Mammary epithelial cell (primary cell): ENCODE measurements at regions of chr6 and their contacts with region 1.

Region 1: GRCh38 chr6:95431637-95432228 is 145.6 kb upstream of the MANEA start:
- DNase-seq: peak; percentile 5
- H3K4me3 ChIP-seq: no peak overlapping the region
- H3K27ac ChIP-seq: no peak overlapping the region
- H3K4me1 ChIP-seq: no peaks in the 10 kb centered on the region
- H3K27me3 ChIP-seq: no peaks in the 10 kb centered on the region
- CTCF ChIP-seq: peak; percentile 62 to 72

Region 2: GRCh38 chr6:95769292-95769691 is 337.6 kb after region 1 on chr6:
- CTCF ChIA-PET with region 1: no interaction called
- dilution Hi-C with region 1: no loop called
- in situ Hi-C with region 1: no loop called
- intact Hi-C with region 1: loop called (anchors 5 kb)
- DNase-seq: no peak
- H3K4me3 ChIP-seq: no peak overlapping the region
- H3K27ac ChIP-seq: no peak overlapping the region
- H3K4me1 ChIP-seq: no peaks in the 10 kb centered on the region
- H3K27me3 ChIP-seq: peaks cover 2% of the 10 kb centered on the region
- CTCF ChIP-seq: no peak

Region 3: GRCh38 chr6:95866732-95867131 is 435.0 kb after region 1 on chr6:
- CTCF ChIA-PET with region 1: no interaction called
- dilution Hi-C with region 1: no loop called
- in situ Hi-C with region 1: loop called in 1 of 2 experiments (anchors 25 kb)
- intact Hi-C with region 1: loop called (anchors 1 kb)
- DNase-seq: no peak
- H3K4me3 ChIP-seq: no peak overlapping the region
- H3K27ac ChIP-seq: no peak overlapping the region
- H3K4me1 ChIP-seq: no peaks in the 10 kb centered on the region
- H3K27me3 ChIP-seq: no peaks in the 10 kb centered on the region
- CTCF ChIP-seq: peak; percentile 19 to 57

Region 4: DNA sequence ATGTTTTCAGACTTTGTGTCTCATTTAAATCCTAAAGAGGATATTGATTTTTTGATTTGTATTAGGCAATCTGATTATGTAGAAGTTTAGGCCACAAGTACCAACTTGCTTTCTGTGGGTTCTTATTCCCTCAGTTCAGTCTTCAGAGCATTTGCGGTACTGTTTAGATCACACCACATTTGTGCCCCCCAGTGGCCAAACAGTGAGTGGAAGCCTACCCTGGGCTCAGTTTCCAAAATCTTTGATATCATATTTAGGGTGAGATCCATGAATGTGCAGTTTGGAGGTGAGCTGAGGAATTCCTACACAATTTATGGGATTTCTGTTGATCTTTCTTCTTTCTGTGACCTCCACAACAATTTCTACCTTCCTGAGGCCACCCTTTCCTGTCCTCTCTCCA is 491.8 kb after region 1 on chr6:
- CTCF ChIA-PET with region 1: no interaction called
- dilution Hi-C with region 1: no loop called
- in situ Hi-C with region 1: no loop called
- intact Hi-C with region 1: loop called (anchors 5 kb)
- DNase-seq: no peak
- H3K4me3 ChIP-seq: no peak overlapping the region
- H3K27ac ChIP-seq: no peak overlapping the region
- H3K4me1 ChIP-seq: no peaks in the 10 kb centered on the region
- H3K27me3 ChIP-seq: no peaks in the 10 kb centered on the region
- CTCF ChIP-seq: peak; percentile 22 to 42

Region 5: GRCh38 chr6:96089173-96089572 is 657.4 kb after region 1 on chr6:
- CTCF ChIA-PET with region 1: no interaction called
- dilution Hi-C with region 1: no loop called
- in situ Hi-C with region 1: no loop called
- intact Hi-C with region 1: loop called (anchors 2 kb)
- DNase-seq: peak; percentile 2
- H3K4me3 ChIP-seq: no peak overlapping the region
- H3K27ac ChIP-seq: no peak overlapping the region
- H3K4me1 ChIP-seq: no peaks in the 10 kb centered on the region
- H3K27me3 ChIP-seq: no peaks in the 10 kb centered on the region
- CTCF ChIP-seq: peak; percentile 52 to 71